ENCODE measurements at regions of chr12 and their contacts with region 1.

Region 1: GRCh38 chr12:120649442-120650232 is 9.2 kb downstream of the CABP1 start:
- DNase-seq: no peak
- ATAC-seq: no peak
- H3K4me3 Mint-ChIP-seq: peak overlapping the region; percentile 75
- H3K27ac Mint-ChIP-seq: peak overlapping the region; percentile 44
- H3K4me1 Mint-ChIP-seq: peaks cover 26% of the 10 kb centered on the region
- H3K27me3 Mint-ChIP-seq: peaks cover 48% of the 10 kb centered on the region
- CTCF ChIP-seq: peak; percentile 50

Region 2: DNA sequence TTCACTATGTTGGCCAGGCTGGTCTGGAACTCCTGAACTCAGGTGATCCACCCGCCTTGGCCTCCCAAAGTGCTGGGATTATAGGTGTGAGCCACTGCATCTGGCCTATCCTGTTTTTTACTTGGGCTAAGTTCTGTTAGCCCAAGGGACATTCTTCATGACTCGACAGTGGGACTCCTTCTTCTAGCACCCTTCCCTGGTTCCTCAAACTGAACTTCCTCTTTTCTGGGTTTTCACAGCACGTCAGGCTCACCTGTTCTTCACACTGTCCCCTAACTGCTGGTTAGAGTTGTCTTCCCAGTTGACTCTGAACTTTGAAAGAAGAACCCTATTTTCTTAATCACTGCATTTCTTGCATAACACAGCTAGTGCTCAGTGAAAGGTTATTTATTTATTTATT is 13.2 kb after region 1 on chr12:
- CTCF ChIA-PET with region 1: interaction called, 32 read pairs
- POLR2A ChIA-PET with region 1: interaction called, 12 read pairs
- intact Hi-C with region 1: loop called (anchors 1 kb)
- DNase-seq: no peak
- ATAC-seq: peak; percentile 96
- H3K4me3 Mint-ChIP-seq: peak overlapping the region; percentile 48
- H3K27ac Mint-ChIP-seq: peak overlapping the region; percentile 42
- H3K4me1 Mint-ChIP-seq: peaks cover 32% of the 10 kb centered on the region
- H3K27me3 Mint-ChIP-seq: no peaks in the 10 kb centered on the region
- CTCF ChIP-seq: no peak

Region 3: DNA sequence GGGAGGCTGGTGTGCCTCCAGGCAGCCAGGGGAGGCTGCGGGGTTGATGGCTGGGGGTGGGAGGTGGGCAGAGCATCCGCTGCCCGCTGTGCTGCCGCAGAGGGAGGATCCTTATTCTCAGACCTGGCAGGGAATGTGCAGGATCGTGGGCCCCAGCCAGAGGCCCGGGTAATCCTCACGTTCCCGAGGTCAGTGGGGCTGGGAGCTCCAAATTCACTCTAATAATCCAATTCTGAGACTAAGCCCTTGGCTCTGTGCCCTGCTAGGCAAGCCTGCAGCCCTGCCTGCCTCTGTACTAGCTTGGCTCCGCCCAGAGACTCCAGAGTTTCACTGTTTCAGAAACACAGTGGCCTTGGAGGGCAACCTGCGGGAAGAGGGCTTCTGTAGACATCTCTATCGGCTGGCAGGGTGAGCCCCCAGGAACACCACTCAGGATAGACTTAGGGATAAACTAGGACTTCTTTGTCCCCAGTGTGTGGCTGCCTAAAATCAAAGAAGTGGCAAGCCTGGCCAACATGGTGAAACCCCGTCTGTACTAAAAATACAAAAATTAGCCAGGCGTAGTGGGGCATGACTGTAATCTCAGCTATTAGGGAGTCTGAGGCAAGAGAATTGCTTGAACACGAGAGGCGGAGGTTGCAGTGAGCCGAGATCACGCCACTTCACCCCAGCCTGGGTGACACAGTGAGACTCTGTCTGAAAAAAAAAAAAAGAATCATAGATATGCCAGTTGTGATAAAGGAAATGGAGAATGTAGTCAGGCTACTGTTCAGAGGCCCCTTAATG is 19.6 kb after region 1 on chr12:
- CTCF ChIA-PET with region 1: interaction called, 32 read pairs
- POLR2A ChIA-PET with region 1: interaction called, 13 read pairs
- intact Hi-C with region 1: loop called (anchors 1 kb)
- DNase-seq: peak; percentile 43
- ATAC-seq: peak; percentile 79
- H3K4me3 Mint-ChIP-seq: peak overlapping the region; percentile 74
- H3K27ac Mint-ChIP-seq: peak overlapping the region; percentile 89
- H3K4me1 Mint-ChIP-seq: peaks cover 80% of the 10 kb centered on the region
- H3K27me3 Mint-ChIP-seq: peaks cover 5% of the 10 kb centered on the region
- CTCF ChIP-seq: no peak

Region 4: GRCh38 chr12:120677765-120678473 is 28.3 kb after region 1 on chr12:
- CTCF ChIA-PET with region 1: interaction called, 13 read pairs
- POLR2A ChIA-PET with region 1: interaction called, 14 read pairs
- intact Hi-C with region 1: no loop called
- DNase-seq: no peak
- ATAC-seq: peak; percentile 71
- H3K4me3 Mint-ChIP-seq: peak overlapping the region; percentile 74
- H3K27ac Mint-ChIP-seq: peak overlapping the region; percentile 89
- H3K4me1 Mint-ChIP-seq: peaks cover 58% of the 10 kb centered on the region
- H3K27me3 Mint-ChIP-seq: no peaks in the 10 kb centered on the region
- CTCF ChIP-seq: no peak

Region 5: DNA sequence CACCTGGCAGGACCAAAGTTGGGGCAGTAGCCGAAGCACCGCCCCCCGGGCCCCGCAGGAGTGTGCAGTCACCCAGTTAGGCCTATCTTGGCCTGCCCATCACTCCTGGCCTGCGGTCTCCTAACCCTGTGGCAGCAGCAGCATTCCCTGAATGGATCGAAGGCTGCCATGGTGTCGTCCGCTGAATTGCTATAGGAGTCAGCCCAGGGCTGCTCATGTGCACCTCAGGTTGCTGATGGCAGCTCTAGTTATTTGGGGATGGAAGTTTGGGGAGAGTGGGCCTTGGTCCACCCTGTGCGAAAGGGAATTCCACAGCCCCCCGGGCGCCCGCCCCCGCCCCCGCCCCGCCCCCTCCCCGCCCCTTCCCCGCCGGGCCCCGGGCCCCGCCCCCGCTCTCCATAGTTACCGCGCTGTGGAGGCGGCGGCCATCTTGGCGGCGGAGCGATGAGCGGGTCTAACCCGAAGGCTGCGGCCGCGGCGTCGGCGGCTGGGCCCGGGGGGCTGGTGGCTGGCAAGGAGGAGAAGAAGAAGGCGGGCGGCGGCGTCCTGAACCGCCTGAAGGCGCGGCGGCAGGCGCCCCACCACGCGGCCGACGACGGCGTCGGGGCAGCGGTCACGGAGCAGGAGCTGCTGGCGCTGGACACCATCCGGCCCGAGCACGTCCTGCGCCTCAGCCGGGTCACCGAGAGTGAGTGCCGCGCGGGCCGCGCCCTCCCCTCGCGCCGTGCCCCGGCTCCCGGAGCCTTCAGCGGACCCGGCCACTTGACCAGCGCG is 60.6 kb after region 1 on chr12 and contains the start of gene UNC119B:
- CTCF ChIA-PET with region 1: interaction called, 35 read pairs
- POLR2A ChIA-PET with region 1: interaction called, 7 read pairs
- intact Hi-C with region 1: loop called (anchors 1 kb)
- DNase-seq: peak; percentile 71
- ATAC-seq: peak; percentile 92
- H3K4me3 Mint-ChIP-seq: peak within 1 kb of the TSS; percentile 89
- H3K27ac Mint-ChIP-seq: peak within 1 kb of the TSS; percentile 82
- H3K4me1 Mint-ChIP-seq: peaks cover 29% of the 10 kb centered on the region
- H3K27me3 Mint-ChIP-seq: no peaks in the 10 kb centered on the region
- CTCF ChIP-seq: no peak
- total RNA-seq, gene UNC119B: 17.3 and 18.5 TPM in 2 replicates

Region 6: DNA sequence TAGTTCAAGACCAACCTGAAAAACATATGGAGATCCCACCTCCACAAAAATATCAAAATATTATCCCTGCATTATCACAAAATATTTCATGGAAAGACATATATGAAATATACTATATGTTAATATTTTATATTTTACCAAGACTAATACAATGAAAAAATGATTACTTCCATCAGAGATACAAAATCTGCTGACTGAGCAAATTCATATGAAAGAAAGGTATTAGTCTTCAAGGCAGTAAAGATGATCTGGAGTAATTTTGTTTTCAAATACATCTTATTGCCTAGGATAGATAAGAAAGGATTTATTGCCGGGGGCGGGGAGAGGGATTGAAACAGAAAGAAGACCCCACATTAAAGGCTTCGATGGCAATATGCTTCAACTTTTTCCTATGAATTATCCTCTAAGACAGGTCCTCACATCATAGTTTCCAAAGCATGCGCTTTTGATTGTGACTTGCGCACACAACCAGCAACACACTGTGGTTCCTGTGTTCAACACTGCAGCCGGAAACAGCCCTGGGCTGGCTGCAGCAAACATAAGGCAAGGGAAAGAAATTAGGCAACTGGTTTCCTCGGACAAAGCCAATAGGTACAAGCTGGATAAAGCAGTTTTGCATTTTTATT is 171.4 kb after region 1 on chr12:
- CTCF ChIA-PET with region 1: no interaction called
- POLR2A ChIA-PET with region 1: no interaction called
- intact Hi-C with region 1: no loop called
- DNase-seq: no peak
- ATAC-seq: no peak
- H3K4me3 Mint-ChIP-seq: no peak overlapping the region
- H3K27ac Mint-ChIP-seq: no peak overlapping the region
- H3K4me1 Mint-ChIP-seq: peaks cover 23% of the 10 kb centered on the region
- H3K27me3 Mint-ChIP-seq: no peaks in the 10 kb centered on the region
- CTCF ChIP-seq: no peak

Region 7: GRCh38 chr12:120971299-120972179 is 321.9 kb after region 1 on chr12:
- CTCF ChIA-PET with region 1: interaction called, 51 read pairs
- POLR2A ChIA-PET with region 1: no interaction called
- intact Hi-C with region 1: loop called (anchors 1 kb)
- DNase-seq: no peak
- ATAC-seq: peak; percentile 94
- H3K4me3 Mint-ChIP-seq: no peak overlapping the region
- H3K27ac Mint-ChIP-seq: no peak overlapping the region
- H3K4me1 Mint-ChIP-seq: peaks cover 8% of the 10 kb centered on the region
- H3K27me3 Mint-ChIP-seq: peaks cover 3% of the 10 kb centered on the region
- CTCF ChIP-seq: no peak

Measured in activated B cell treated with CpG ODN at 0.5 μM for 24 hours (primary cell).